ENCODE measurements at regions of chr7 and their contacts with region 1.

Region 1: GRCh38 chr7:7681179-7681935 is 37.0 kb downstream of the RPA3 start:
- DNase-seq: peak in 23 of 35 experiments; percentile 5 to 77 (median 37)
- ATAC-seq: peak; percentile 58 to 87 (median 78)
- H3K4me3 ChIP-seq: no peak overlapping the region
- H3K4me3 Mint-ChIP-seq: no peak overlapping the region
- H3K27ac ChIP-seq: peak overlapping the region; percentile 54
- H3K27ac Mint-ChIP-seq: peak overlapping the region; percentile 72 to 85
- H3K4me1 ChIP-seq: peaks cover 0 to 3% of the 10 kb centered on the region in 2 experiments
- H3K4me1 Mint-ChIP-seq: peaks cover 35 to 44% (median 39%) of the 10 kb centered on the region in 3 donors
- H3K27me3 ChIP-seq: no peaks in the 10 kb centered on the region
- H3K27me3 Mint-ChIP-seq: no peaks in the 10 kb centered on the region

Region 2: DNA sequence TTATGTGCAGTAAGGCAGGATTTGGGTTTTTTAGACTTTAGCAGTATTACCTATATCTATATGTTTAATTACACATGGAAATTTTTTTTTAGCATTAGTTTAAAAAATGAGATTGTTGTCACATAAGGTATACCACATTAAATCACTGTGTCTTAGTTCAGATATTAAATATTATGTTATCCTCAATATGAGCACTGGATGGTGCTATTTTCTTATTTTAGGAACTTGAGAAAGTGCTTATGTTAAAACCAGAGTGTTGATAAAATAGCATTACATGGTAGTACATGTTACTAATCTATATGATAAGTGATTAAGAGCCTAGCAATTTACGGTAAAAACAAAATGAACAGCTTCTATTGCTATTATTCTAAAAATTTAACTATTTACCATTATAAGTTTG is 85.9 kb before region 1 on chr7:
- CTCF ChIA-PET with region 1: interaction called in 1 of 2 experiments, 12 read pairs
- POLR2A ChIA-PET with region 1: no interaction called
- DNase-seq: peak in 1 of 35 experiments; percentile 56
- ATAC-seq: no peak
- H3K4me3 ChIP-seq: no peak overlapping the region
- H3K4me3 Mint-ChIP-seq: no peak overlapping the region
- H3K27ac ChIP-seq: no peak overlapping the region
- H3K27ac Mint-ChIP-seq: no peak overlapping the region
- H3K4me1 ChIP-seq: no peaks in the 10 kb centered on the region
- H3K4me1 Mint-ChIP-seq: peaks cover 0 to 3% (median 0%) of the 10 kb centered on the region in 3 donors
- H3K27me3 ChIP-seq: no peaks in the 10 kb centered on the region
- H3K27me3 Mint-ChIP-seq: no peaks in the 10 kb centered on the region

Region 3: DNA sequence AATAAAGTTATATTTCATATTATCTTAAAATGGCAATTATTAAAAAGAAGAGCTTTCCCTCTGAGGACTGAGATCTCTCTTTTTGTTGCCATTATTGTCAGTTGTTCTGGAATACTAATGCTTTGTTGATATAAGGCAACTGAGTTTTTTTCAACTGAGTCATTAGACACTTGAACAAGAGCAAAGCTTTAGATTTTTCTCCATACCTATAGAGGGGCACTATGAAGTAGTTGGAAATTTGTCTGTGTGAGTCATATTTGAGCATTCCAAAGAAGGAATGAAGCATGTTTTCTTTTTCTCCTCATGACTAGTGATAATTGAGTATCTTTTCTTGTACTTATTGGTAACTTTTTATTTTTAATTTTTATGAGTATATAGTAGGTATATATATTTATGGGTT is 12.5 kb after region 1 on chr7:
- CTCF ChIA-PET with region 1: interaction called, 14 to 18 read pairs
- POLR2A ChIA-PET with region 1: no interaction called
- DNase-seq: no peak
- ATAC-seq: no peak
- H3K4me3 ChIP-seq: no peak overlapping the region
- H3K4me3 Mint-ChIP-seq: no peak overlapping the region
- H3K27ac ChIP-seq: no peak overlapping the region
- H3K27ac Mint-ChIP-seq: no peak overlapping the region
- H3K4me1 ChIP-seq: no peaks in the 10 kb centered on the region
- H3K4me1 Mint-ChIP-seq: peaks cover 19 to 27% (median 20%) of the 10 kb centered on the region in 3 donors
- H3K27me3 ChIP-seq: no peaks in the 10 kb centered on the region
- H3K27me3 Mint-ChIP-seq: no peaks in the 10 kb centered on the region

Region 4: GRCh38 chr7:8035647-8036518 is 354.5 kb after region 1 on chr7:
- CTCF ChIA-PET with region 1: interaction called, 4 to 25 read pairs
- POLR2A ChIA-PET with region 1: interaction called in 1 of 2 experiments, 4 read pairs
- DNase-seq: peak in 4 of 35 experiments; percentile 2 to 62 (median 8)
- ATAC-seq: peak; percentile 85 to 93 (median 90)
- H3K4me3 ChIP-seq: no peak overlapping the region
- H3K4me3 Mint-ChIP-seq: no peak overlapping the region
- H3K27ac ChIP-seq: no peak overlapping the region
- H3K27ac Mint-ChIP-seq: peak overlapping the region; percentile 76 to 80
- H3K4me1 ChIP-seq: peaks cover 0 to 12% of the 10 kb centered on the region in 2 experiments
- H3K4me1 Mint-ChIP-seq: peaks cover 13 to 32% (median 24%) of the 10 kb centered on the region in 3 donors
- H3K27me3 ChIP-seq: no peaks in the 10 kb centered on the region
- H3K27me3 Mint-ChIP-seq: no peaks in the 10 kb centered on the region

Region 5: DNA sequence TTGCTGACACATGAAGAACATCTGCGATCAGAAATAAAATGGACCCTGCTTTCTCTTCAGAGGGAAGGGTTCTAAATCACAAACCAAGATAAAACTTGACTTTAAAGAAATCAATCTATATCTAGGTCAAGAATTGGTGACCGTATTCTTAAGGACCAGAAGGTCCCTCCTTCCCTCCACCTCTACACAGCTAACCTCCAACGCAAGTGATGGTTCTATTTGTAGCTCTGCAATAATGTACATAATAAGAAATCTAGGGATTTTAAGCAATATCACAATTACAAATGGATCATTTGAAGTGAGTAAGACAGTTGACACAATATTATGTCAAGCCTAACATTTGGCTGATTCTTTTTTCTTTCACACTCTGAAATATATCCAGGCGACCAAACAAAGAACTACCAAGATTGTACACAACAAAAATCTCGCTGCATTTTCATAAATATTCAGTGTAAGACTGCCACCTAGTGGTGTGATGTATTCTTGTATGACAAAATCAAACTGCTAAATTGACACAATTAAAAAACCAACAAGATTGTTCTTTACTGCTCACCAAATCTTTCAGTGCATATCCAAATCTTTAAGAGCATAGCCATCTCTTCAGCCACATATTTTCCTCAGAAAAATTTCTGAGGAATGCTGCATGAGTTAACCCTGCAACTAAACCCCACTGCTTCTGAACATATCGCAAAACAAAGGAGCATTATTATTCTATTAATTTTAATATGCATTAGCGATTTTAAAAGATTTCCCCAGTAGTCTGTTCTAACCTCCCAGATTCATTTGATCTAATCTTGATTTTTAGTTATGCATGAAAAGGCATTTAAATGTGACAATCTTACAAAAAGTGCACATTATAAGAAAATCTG is 536.1 kb after region 1 on chr7:
- CTCF ChIA-PET with region 1: interaction called, 16 to 17 read pairs
- POLR2A ChIA-PET with region 1: no interaction called
- DNase-seq: peak in 12 of 35 experiments; percentile 4 to 85 (median 16)
- ATAC-seq: peak in 3 of 4 experiments; percentile 46 to 52 (median 51)
- H3K4me3 ChIP-seq: no peak overlapping the region
- H3K4me3 Mint-ChIP-seq: no peak overlapping the region
- H3K27ac ChIP-seq: no peak overlapping the region
- H3K27ac Mint-ChIP-seq: no peak overlapping the region
- H3K4me1 ChIP-seq: no peaks in the 10 kb centered on the region
- H3K4me1 Mint-ChIP-seq: peaks cover 0 to 4% (median 3%) of the 10 kb centered on the region in 3 donors
- H3K27me3 ChIP-seq: no peaks in the 10 kb centered on the region
- H3K27me3 Mint-ChIP-seq: no peaks in the 10 kb centered on the region

Measured in T-cell (primary cell).